ENCODE measurements at regions of chr13 and their contacts with region 1.

Region 1: DNA sequence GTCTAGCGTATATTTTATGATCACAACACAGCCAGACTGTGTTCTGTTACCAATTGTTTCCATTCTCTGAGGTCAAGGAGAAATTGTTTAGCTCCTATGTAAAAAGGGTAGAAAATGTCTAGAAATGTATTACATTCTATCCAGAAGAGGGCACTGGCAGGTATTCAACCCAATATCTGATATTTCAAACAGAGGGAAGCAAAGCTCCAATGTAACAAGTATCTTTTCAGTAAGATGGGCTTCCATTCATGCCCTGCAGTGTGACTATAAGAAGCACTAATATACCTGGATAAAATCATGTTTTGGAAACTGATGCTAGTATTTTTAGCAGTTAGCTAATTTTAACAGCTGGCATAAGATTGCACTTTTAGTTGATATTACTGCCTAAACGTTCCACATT is 312.7 kb downstream of the FGF14 start:
- DNase-seq: no peak
- H3K4me3 ChIP-seq: no peak overlapping the region
- H3K27ac ChIP-seq: peak overlapping the region in 1 of 2 experiments; percentile 58; a peak in 2 of 4 replicates
- H3K4me1 ChIP-seq: peaks cover 0 to 6% of the 10 kb centered on the region in 2 experiments; a peak in 1 of 4 replicates
- H3K27me3 ChIP-seq: no peaks in the 10 kb centered on the region
- CTCF ChIP-seq: peak; percentile 53
- EP300 ChIP-seq: no peak
- RAD21 ChIP-seq: peak; percentile 41; the same call in 1 of the 2 replicates

Region 2: DNA sequence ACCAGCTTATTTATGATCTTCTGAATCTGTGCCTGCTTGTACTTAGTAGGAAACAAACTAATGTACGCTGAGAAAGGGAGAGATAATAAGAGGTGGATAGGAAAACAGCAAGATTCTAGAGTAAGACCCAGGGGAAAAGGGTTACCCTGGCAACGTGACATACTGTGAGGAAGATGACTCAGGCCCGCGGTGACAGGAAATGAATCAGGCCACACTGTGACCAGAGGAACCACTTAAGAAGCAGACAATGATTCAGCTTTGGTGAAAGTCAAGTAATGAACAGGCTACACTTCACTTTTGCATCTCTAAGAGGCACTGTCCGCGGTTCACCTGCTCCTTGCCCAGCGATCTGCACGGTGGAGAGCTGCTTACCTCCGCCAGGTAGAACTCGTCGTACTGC is 831.1 kb before region 1 on chr13:
- CTCF ChIA-PET with region 1: no interaction called
- POLR2A ChIA-PET with region 1: no interaction called
- DNase-seq: no peak
- H3K4me3 ChIP-seq: no peak overlapping the region
- H3K27ac ChIP-seq: peak overlapping the region in 1 of 2 experiments; percentile 87; a peak in 2 of 4 replicates
- H3K4me1 ChIP-seq: peaks cover 0 to 10% of the 10 kb centered on the region in 2 experiments; a peak in 3 of 4 replicates
- H3K27me3 ChIP-seq: no peaks in the 10 kb centered on the region
- CTCF ChIP-seq: no peak
- EP300 ChIP-seq: no peak; a peak in 1 of 4 replicates
- RAD21 ChIP-seq: no peak

Region 3: GRCh38 chr13:102100234-102100633 is 11.1 kb after region 1 on chr13:
- CTCF ChIA-PET with region 1: interaction called, 10 read pairs
- POLR2A ChIA-PET with region 1: no interaction called
- DNase-seq: no peak
- H3K4me3 ChIP-seq: no peak overlapping the region
- H3K27ac ChIP-seq: no peak overlapping the region; a peak in 1 of 4 replicates
- H3K4me1 ChIP-seq: peaks cover 0 to 5% of the 10 kb centered on the region in 2 experiments; a peak in 1 of 4 replicates
- H3K27me3 ChIP-seq: no peaks in the 10 kb centered on the region
- CTCF ChIP-seq: no peak
- EP300 ChIP-seq: no peak
- RAD21 ChIP-seq: no peak

Measured in SK-N-SH (cell line).